ENCODE measurements at regions of chr1 and their contacts with region 1.

Region 1: GRCh38 chr1:93453911-93454310 is 6.0 kb downstream of the FNBP1L start:
- DNase-seq: no peak
- H3K4me3 ChIP-seq: no peak overlapping the region
- H3K27ac ChIP-seq: no peak overlapping the region
- H3K4me1 ChIP-seq: no peaks in the 10 kb centered on the region
- H3K27me3 ChIP-seq: no peaks in the 10 kb centered on the region
- CTCF ChIP-seq: no peak

Region 2: GRCh38 chr1:93579891-93580290 is 126.0 kb after region 1 on chr1:
- intact Hi-C with region 1: loop called (anchors 10 kb)
- DNase-seq: peak; percentile 69
- H3K4me3 ChIP-seq: no peak overlapping the region
- H3K27ac ChIP-seq: peak overlapping the region; percentile 70
- H3K4me1 ChIP-seq: peaks cover 16% of the 10 kb centered on the region
- H3K27me3 ChIP-seq: no peaks in the 10 kb centered on the region
- CTCF ChIP-seq: no peak

Measured in colonic mucosa (tissue), 4 donors.